ENCODE measurements at regions of chr11 and their contacts with region 1.

Region 1: GRCh38 chr11:133956650-133957633 is at the start of gene IGSF9B:
- DNase-seq: peak; percentile 90
- H3K4me3 ChIP-seq: peak within 1 kb of the TSS; percentile 44
- H3K27ac ChIP-seq: peak within 1 kb of the TSS; percentile 1
- H3K4me1 ChIP-seq: peaks cover 3% of the 10 kb centered on the region
- H3K27me3 ChIP-seq: peaks cover 15% of the 10 kb centered on the region
- CTCF ChIP-seq: no peak
- total RNA-seq, gene IGSF9B: 5.0 to 6.0 TPM

Region 2: DNA sequence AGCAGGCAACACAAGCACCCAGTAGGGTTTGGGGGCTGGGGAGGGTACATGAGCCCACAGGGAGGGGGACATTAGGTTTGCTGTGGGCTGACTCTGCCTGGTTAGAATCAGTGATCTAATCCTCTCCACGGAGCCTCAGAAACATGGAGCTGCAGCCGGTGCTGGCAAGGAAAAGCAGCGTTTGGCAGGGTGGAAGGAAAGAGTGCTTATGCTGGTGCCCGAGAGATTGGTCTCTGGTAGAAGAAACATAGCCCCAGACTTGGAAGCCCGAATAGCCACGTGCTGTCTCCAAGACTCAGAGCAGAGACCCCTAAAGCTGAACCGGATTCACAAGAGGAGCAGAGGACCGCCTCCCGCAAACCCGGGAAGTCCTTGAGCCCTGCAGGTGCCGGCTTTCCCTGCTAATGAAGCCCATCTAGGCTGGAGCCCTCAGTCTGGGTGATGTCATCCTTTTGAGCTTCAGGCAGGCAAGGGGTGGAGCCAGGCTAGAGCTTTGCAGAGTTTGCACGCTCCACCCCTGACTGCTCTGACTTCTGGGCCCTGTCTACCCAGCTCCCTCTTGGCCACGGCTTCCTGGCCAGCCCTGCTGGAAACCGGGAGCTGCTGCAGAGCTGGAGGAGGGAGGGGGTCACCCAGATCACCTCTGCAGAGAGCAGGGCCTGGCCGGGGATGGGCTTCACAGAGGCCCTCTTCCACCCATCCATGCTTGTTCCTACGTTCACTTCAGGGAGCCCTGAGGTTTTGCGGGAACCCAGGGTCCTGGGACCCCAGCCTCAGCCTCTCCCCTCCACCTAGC is 77.0 kb after region 1 on chr11:
- intact Hi-C with region 1: loop called (anchors 10 kb)
- DNase-seq: peak; percentile 78
- H3K4me3 ChIP-seq: peak overlapping the region; percentile 2
- H3K27ac ChIP-seq: peak overlapping the region; percentile 39
- H3K4me1 ChIP-seq: peaks cover 3% of the 10 kb centered on the region
- H3K27me3 ChIP-seq: no peaks in the 10 kb centered on the region
- CTCF ChIP-seq: no peak

Region 3: DNA sequence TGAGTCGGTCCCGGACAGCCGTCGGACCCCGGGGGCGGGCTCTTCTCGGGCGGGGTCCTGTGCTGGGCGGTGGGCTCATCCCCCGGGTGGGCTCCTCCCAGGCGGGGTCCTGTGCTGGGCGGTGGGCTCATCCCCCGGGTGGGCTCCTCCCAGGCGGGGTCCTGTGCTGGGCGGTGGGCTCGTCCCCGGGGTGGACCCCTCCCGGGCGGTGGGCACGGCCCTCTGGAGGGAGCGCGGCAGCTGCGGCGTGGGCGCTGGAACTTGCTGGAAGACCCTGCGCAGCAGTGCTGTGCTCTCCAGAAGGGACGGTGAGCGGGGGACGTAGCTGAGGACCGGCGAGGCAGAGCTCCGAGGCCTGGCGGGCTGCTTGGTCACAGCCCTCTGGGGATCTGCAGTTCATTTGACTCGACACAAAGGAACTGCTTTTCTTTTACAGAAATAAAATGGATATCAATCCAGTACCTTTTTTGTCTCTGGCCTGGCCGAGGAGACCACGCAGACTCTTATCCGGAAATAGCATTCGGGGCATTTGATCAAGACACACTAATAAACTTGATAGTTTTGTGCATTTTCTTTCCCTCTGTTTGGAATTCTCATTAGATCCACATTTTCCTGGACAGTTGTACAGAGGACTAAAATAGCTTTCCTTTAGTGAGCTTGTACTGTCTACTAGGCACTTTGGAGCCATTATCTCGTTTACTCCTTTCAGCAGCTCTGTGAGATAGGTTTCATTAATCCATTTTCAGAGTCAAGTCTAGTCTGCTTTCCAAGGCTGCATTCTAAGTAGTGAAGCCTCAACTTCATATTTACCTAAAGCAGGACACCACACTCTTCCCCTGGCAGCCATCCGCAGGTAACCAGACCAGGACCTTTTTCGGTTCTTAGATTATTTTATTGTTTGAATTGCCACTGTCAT is 112.7 kb after region 1 on chr11:
- intact Hi-C with region 1: no loop called
- DNase-seq: no peak
- H3K4me3 ChIP-seq: peak overlapping the region; percentile 49
- H3K27ac ChIP-seq: peak overlapping the region; percentile 24
- H3K4me1 ChIP-seq: no peaks in the 10 kb centered on the region
- H3K27me3 ChIP-seq: peaks cover 19% of the 10 kb centered on the region
- CTCF ChIP-seq: no peak

Measured in colonic mucosa (tissue), 4 donors.